ENCODE measurements at regions of chr18 and their contacts with region 1.

Region 1: GRCh38 chr18:61333746-61334490 is 688 bp downstream of the CDH20 start:
- DNase-seq: peak; percentile 39 to 94 (median 46)

Region 2: GRCh38 chr18:61400716-61401115 is 66.8 kb after region 1 on chr18:
- intact Hi-C with region 1: loop called (anchors 5 kb)
- DNase-seq: no peak

Region 3: DNA sequence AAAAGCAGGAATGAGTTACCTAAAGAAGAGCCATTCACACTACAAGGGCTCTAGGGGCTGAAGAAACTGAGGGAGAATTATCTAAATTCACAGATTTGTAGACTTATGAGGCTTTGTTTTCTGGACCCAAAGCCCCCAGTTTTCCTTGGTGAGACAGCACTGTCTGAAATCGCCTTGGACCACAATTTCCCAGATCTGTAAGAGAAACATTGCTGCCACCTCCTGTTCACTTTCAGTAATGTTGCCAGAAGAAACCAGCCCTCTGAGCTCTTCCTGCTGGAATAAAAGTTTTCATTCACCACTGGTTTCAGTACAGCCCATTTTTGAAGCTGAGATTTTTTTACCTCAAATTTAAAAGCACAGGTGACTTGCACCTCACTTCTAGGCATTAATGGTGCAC is 168.6 kb after region 1 on chr18:
- intact Hi-C with region 1: no loop called
- DNase-seq: peak in 6 of 10 donors; percentile 20 to 62 (median 48)

Region 4: DNA sequence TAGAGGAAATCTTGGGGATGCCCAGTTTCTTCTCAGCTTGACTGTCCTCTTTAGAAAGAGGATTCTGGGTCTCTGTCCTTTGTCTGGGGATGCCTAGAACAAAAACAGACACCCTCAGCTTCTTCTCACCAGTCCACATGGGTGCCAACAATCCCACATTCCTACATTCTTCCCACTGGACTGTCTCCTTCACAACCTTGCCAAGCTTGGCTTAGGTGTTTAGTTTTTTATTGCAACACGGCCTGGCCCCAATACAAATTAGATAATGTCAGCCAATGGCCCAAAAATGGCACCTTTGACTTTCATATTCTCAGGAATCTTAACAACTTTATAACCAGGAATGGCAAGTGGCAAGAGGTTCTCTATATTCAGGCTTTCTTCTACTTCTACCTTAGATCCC is 285.9 kb after region 1 on chr18:
- intact Hi-C with region 1: no loop called
- DNase-seq: no peak

Measured in posterior cingulate gyrus (tissue), 11 donors.